ENCODE measurements at regions of chr20 and their contacts with region 1.

Region 1: GRCh38 chr20:16476032-16476431 is 97.2 kb downstream of the KIF16B start:
- DNase-seq: peak; percentile 76
- ATAC-seq: peak; percentile 71
- H3K4me3 ChIP-seq: peak overlapping the region in 2 of 3 experiments; percentile 5 to 6; a peak in 2 of 6 replicates
- H3K27ac ChIP-seq: peak overlapping the region; percentile 71
- H3K4me1 ChIP-seq: peaks cover 58% of the 10 kb centered on the region
- H3K27me3 ChIP-seq: no peaks in the 10 kb centered on the region
- CTCF ChIP-seq: peak; percentile 83
- EP300 ChIP-seq: no peak
- POLR2A ChIP-seq: no peak
- RAD21 ChIP-seq: peak; percentile 83

Region 2: GRCh38 chr20:15643714-15644113 is 832.3 kb before region 1 on chr20:
- CTCF ChIA-PET with region 1: no interaction called
- POLR2A ChIA-PET with region 1: no interaction called
- in situ Hi-C with region 1: no loop called
- intact Hi-C with region 1: loop called (anchors 5 kb)
- DNase-seq: peak; percentile 16
- ATAC-seq: peak; percentile 79
- H3K4me3 ChIP-seq: no peak overlapping the region
- H3K27ac ChIP-seq: no peak overlapping the region
- H3K4me1 ChIP-seq: no peaks in the 10 kb centered on the region
- H3K27me3 ChIP-seq: no peaks in the 10 kb centered on the region
- CTCF ChIP-seq: peak; percentile 32
- EP300 ChIP-seq: no peak
- POLR2A ChIP-seq: no peak
- RAD21 ChIP-seq: no peak

Region 3: DNA sequence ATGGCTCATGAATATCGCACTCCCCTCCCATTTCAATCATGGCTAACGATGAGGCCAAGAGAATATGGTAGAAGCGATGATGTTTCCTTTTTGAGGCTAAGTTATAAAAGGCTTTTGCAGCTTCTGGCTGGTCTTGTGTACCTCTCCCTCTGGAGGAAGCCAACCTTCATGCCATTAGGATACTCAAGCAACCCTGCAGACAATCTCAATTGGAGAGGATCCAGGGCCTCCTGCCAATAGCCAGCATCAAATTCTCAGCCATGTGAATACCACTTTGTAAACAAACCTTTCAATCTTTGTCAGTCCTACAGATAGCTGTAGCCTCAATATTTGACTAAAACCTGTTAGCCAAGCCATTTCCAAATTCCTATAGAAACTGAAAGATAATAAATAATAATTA is 641.2 kb before region 1 on chr20:
- CTCF ChIA-PET with region 1: no interaction called
- POLR2A ChIA-PET with region 1: no interaction called
- in situ Hi-C with region 1: no loop called
- intact Hi-C with region 1: loop called (anchors 10 kb)
- DNase-seq: no peak
- ATAC-seq: no peak
- H3K4me3 ChIP-seq: no peak overlapping the region
- H3K27ac ChIP-seq: no peak overlapping the region
- H3K4me1 ChIP-seq: no peaks in the 10 kb centered on the region
- H3K27me3 ChIP-seq: no peaks in the 10 kb centered on the region
- CTCF ChIP-seq: no peak
- EP300 ChIP-seq: no peak
- POLR2A ChIP-seq: no peak
- RAD21 ChIP-seq: no peak

Region 4: DNA sequence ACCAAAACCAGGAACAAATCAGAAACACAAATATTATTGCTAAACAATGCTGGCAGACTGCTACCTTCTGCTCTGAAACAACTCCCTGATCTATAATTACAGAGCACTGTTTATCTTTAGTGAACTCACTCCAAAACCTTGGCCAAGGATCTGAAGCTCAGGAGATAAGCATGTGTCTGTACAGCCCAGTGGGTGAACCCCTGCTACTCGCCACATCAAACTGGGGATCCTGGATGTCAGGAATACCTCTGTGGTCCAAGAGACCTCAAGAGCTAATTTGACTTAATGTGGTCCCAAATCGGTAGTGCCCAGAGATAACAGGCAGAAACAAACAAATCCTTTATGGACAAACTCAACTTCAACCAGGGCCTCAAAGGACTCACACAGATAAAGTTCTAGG is 284.5 kb before region 1 on chr20:
- CTCF ChIA-PET with region 1: no interaction called
- POLR2A ChIA-PET with region 1: no interaction called
- in situ Hi-C with region 1: no loop called
- intact Hi-C with region 1: loop called (anchors 5 kb)
- DNase-seq: peak; percentile 62
- ATAC-seq: peak; percentile 60
- H3K4me3 ChIP-seq: no peak overlapping the region
- H3K27ac ChIP-seq: no peak overlapping the region
- H3K4me1 ChIP-seq: peaks cover 9% of the 10 kb centered on the region
- H3K27me3 ChIP-seq: no peaks in the 10 kb centered on the region
- CTCF ChIP-seq: no peak
- EP300 ChIP-seq: no peak
- POLR2A ChIP-seq: no peak
- RAD21 ChIP-seq: no peak

Region 5: DNA sequence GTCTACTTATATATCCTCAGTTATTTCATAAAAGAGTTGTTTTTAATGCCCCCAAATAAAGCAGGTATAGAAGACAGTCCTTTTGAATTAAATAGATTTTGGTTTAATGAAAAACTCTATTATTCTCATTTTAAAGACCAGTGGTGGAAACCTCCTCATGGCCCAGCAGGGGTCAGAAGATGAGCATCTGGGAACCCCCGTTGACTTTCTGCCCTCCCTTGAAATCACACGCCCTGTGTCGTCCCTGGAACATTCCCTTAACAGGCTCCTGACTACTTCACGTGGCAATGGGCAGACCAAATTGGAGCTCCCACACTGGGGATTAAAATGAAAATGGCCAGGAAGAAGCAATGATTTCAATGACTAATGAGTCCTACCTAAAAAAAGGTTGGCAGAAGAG is 123.7 kb before region 1 on chr20:
- CTCF ChIA-PET with region 1: interaction called, 8 read pairs
- POLR2A ChIA-PET with region 1: no interaction called
- in situ Hi-C with region 1: no loop called
- intact Hi-C with region 1: loop called (anchors 1 kb)
- DNase-seq: no peak
- ATAC-seq: peak; percentile 68
- H3K4me3 ChIP-seq: no peak overlapping the region
- H3K27ac ChIP-seq: no peak overlapping the region
- H3K4me1 ChIP-seq: no peaks in the 10 kb centered on the region
- H3K27me3 ChIP-seq: no peaks in the 10 kb centered on the region
- CTCF ChIP-seq: 0 out of 2 replicates have a peak, but pooled peaks have one; percentile 16
- EP300 ChIP-seq: no peak
- POLR2A ChIP-seq: no peak
- RAD21 ChIP-seq: no peak

Region 6: GRCh38 chr20:16761305-16761829 is 285.3 kb after region 1 on chr20:
- CTCF ChIA-PET with region 1: no interaction called
- POLR2A ChIA-PET with region 1: no interaction called
- in situ Hi-C with region 1: no loop called
- intact Hi-C with region 1: loop called (anchors 1 kb)
- DNase-seq: peak; percentile 77
- ATAC-seq: peak; percentile 96
- H3K4me3 ChIP-seq: no peak overlapping the region
- H3K27ac ChIP-seq: no peak overlapping the region
- H3K4me1 ChIP-seq: peaks cover 10% of the 10 kb centered on the region; the same call in 1 of the 2 replicates
- H3K27me3 ChIP-seq: no peaks in the 10 kb centered on the region; a peak in 1 of 5 replicates
- CTCF ChIP-seq: peak; percentile 97
- EP300 ChIP-seq: no peak
- POLR2A ChIP-seq: no peak
- RAD21 ChIP-seq: peak; percentile 91